ENCODE measurements at regions of chr18 and their contacts with region 1.

Region 1: DNA sequence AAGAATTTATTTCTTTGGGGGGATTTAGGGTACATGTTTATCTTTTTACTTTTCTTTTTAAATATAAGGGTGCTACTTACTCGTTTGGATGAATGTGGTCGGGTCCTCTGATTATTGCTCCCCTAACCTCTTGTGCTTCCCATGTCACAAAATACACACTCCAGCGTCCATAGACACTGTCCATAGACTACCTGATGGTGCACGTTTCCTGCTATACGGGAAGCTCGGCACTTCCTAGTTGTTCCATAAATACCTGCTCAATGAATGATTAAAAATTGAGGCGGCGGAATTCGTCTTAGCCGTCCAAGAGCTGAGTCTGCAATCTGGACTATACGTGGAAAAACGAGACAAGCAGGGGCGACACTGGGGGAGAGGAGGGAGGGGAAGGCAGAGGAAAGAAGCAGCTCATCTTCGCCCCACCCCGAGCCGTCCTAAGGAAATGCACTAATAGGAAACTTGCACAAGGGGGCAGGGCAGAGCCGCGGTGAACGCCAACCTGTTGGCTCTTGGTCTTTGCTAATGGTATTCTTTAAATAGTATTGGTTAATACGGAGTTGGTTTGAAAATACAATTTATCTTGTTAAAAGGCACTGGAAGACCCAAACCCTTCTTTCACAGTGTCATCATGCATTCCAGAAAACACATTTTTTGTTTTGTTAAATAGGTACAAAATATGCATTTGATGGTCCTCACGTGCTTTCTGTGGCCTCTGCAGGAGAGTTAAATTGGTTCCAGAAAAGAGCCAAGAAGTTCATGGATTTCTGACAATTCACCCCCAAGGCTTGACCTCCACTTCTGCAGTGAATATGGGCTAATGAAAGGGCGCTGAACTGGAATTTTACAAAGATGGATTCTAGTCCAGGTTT is 73.0 kb upstream of the KCTD1 start:
- DNase-seq: peak; percentile 44 to 76 (median 75)
- ATAC-seq: peak; percentile 80 to 82
- H3K4me3 ChIP-seq: no peak overlapping the region
- H3K27ac ChIP-seq: no peak overlapping the region
- H3K4me1 ChIP-seq: no peaks in the 10 kb centered on the region
- H3K27me3 ChIP-seq: no peaks in the 10 kb centered on the region

Region 2: GRCh38 chr18:26526128-26526965 is 95.0 kb before region 1 on chr18:
- intact Hi-C with region 1: no loop called
- DNase-seq: no peak
- ATAC-seq: no peak
- H3K4me3 ChIP-seq: no peak overlapping the region
- H3K27ac ChIP-seq: no peak overlapping the region
- H3K4me1 ChIP-seq: peaks cover 3% of the 10 kb centered on the region
- H3K27me3 ChIP-seq: no peaks in the 10 kb centered on the region

Region 3: GRCh38 chr18:26771524-26771923 is 150.1 kb after region 1 on chr18:
- intact Hi-C with region 1: loop called in 2 of 4 experiments (anchors 5 to 10 kb)
- DNase-seq: no peak
- ATAC-seq: peak; percentile 50 to 61
- H3K4me3 ChIP-seq: no peak overlapping the region
- H3K27ac ChIP-seq: no peak overlapping the region
- H3K4me1 ChIP-seq: no peaks in the 10 kb centered on the region
- H3K27me3 ChIP-seq: no peaks in the 10 kb centered on the region

Measured in right cardiac atrium (tissue), 5 donors.